Activated CD8-positive, alpha-beta T cell treated with anti-CD3 and anti-CD28 coated beads, Interleukin-2, amount 10 ng/mL, durations not matched to agents 7 days and 5 days (primary cell): ENCODE measurements at regions of chr6 and their contacts with region 1.

Region 1: GRCh38 chr6:26249957-26250697 is 114.9 kb upstream of the BTN3A2 start:
- DNase-seq: peak; percentile 85
- ATAC-seq: peak; percentile 55
- H3K4me3 Mint-ChIP-seq: peak overlapping the region; percentile 84
- H3K27ac Mint-ChIP-seq: peak overlapping the region; percentile 100
- H3K4me1 Mint-ChIP-seq: peaks cover 30% of the 10 kb centered on the region
- H3K27me3 Mint-ChIP-seq: no peaks in the 10 kb centered on the region

Region 2: GRCh38 chr6:26097268-26097875 is 152.8 kb before region 1 on chr6:
- CTCF ChIA-PET with region 1: no interaction called
- POLR2A ChIA-PET with region 1: no interaction called
- DNase-seq: peak; percentile 78
- ATAC-seq: peak; percentile 85
- H3K4me3 Mint-ChIP-seq: no peak overlapping the region
- H3K27ac Mint-ChIP-seq: no peak overlapping the region
- H3K4me1 Mint-ChIP-seq: peaks cover 16% of the 10 kb centered on the region
- H3K27me3 Mint-ChIP-seq: peaks cover 9% of the 10 kb centered on the region

Region 3: DNA sequence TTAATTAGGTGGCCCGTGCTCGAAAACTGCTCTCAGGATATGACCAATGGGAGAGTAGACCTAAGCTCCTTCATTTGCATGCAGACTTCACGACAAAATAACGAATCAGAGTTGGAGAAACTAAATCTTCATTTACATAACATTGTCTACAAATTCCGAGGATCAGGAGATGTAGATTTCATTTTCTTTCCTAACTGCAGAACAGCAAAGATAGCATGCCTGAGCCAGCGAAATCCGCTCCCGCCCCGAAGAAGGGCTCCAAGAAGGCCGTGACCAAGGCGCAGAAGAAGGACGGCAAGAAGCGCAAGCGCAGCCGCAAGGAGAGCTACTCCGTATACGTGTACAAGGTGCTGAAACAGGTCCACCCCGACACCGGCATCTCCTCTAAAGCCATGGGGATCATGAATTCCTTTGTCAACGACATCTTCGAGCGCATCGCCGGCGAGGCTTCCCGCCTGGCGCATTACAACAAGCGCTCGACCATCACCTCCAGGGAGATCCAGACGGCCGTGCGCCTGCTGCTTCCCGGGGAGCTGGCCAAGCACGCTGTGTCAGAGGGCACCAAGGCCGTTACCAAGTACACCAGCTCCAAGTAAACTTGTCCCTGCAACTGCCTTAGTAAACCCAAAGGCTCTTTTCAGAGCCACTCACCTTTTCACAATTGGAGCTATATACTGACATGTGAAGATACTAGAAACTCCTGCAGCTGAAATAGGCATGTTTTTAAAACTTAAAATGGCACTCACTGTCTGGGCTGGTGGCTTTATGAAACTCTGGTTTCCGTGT is 66.4 kb before region 1 on chr6:
- CTCF ChIA-PET with region 1: interaction called, 3 read pairs
- POLR2A ChIA-PET with region 1: interaction called, 52 read pairs
- DNase-seq: peak; percentile 80
- ATAC-seq: peak; percentile 80
- H3K4me3 Mint-ChIP-seq: peak overlapping the region; percentile 83
- H3K27ac Mint-ChIP-seq: peak overlapping the region; percentile 97
- H3K4me1 Mint-ChIP-seq: peaks cover 79% of the 10 kb centered on the region
- H3K27me3 Mint-ChIP-seq: no peaks in the 10 kb centered on the region

Region 4: GRCh38 chr6:26204332-26205165 is 45.6 kb before region 1 on chr6:
- CTCF ChIA-PET with region 1: interaction called, 3 read pairs
- POLR2A ChIA-PET with region 1: interaction called, 19 read pairs
- DNase-seq: peak; percentile 95
- ATAC-seq: peak; percentile 66
- H3K4me3 Mint-ChIP-seq: no peak overlapping the region
- H3K27ac Mint-ChIP-seq: no peak overlapping the region
- H3K4me1 Mint-ChIP-seq: peaks cover 41% of the 10 kb centered on the region
- H3K27me3 Mint-ChIP-seq: no peaks in the 10 kb centered on the region

Region 5: GRCh38 chr6:26223650-26224546 is 26.2 kb before region 1 on chr6:
- CTCF ChIA-PET with region 1: interaction called, 3 read pairs
- POLR2A ChIA-PET with region 1: interaction called, 12 read pairs
- DNase-seq: peak; percentile 83
- ATAC-seq: peak; percentile 83
- H3K4me3 Mint-ChIP-seq: no peak overlapping the region
- H3K27ac Mint-ChIP-seq: no peak overlapping the region
- H3K4me1 Mint-ChIP-seq: peaks cover 37% of the 10 kb centered on the region
- H3K27me3 Mint-ChIP-seq: no peaks in the 10 kb centered on the region

Region 6: DNA sequence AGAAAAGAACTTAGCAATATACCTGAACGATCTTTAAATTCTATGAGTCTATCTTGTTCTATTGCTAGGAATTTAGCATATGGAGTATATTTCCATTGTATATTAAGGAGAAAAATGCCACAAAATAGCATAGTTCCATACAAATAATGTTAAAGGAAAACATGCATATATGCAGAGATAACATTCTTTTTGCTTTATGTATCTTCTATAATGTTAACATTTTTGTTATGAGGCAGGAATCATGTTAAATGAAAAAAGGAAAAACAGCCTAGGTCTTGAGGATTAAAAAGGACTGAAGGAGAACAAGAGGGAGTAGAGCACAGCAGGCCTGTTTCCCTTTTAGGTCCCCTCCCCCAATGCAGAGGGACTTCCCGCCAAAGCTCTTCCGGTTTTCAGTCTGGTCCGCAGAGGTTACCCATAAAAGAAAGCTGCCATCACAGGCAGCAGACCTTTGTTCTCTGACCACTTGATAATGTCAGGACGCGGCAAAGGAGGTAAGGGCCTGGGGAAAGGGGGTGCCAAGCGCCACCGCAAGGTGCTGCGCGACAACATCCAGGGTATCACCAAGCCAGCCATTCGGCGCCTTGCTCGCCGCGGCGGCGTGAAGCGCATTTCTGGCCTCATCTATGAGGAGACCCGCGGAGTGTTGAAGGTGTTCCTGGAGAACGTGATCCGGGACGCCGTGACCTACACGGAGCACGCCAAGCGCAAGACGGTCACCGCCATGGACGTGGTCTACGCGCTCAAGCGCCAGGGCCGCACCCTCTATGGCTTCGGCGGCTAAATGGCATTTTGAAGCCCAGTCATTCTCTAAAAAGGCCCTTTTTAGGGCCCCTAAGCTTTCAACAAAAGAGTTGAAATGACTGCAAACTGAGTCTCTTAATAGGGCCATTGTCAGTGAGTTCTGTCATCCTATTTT is 889.0 kb after region 1 on chr6:
- CTCF ChIA-PET with region 1: no interaction called
- POLR2A ChIA-PET with region 1: interaction called, 16 read pairs
- DNase-seq: peak; percentile 87
- ATAC-seq: peak; percentile 68
- H3K4me3 Mint-ChIP-seq: peak overlapping the region; percentile 95
- H3K27ac Mint-ChIP-seq: peak overlapping the region; percentile 98
- H3K4me1 Mint-ChIP-seq: peaks cover 71% of the 10 kb centered on the region
- H3K27me3 Mint-ChIP-seq: no peaks in the 10 kb centered on the region

Region 7: GRCh38 chr6:27871924-27872638 is 1622.0 kb after region 1 on chr6:
- CTCF ChIA-PET with region 1: no interaction called
- POLR2A ChIA-PET with region 1: interaction called, 36 read pairs
- DNase-seq: peak; percentile 92
- ATAC-seq: peak; percentile 62
- H3K4me3 Mint-ChIP-seq: peak overlapping the region; percentile 85
- H3K27ac Mint-ChIP-seq: peak overlapping the region; percentile 99
- H3K4me1 Mint-ChIP-seq: peaks cover 64% of the 10 kb centered on the region
- H3K27me3 Mint-ChIP-seq: no peaks in the 10 kb centered on the region